ENCODE measurements at regions of chr5 and their contacts with region 1.

Region 1: DNA sequence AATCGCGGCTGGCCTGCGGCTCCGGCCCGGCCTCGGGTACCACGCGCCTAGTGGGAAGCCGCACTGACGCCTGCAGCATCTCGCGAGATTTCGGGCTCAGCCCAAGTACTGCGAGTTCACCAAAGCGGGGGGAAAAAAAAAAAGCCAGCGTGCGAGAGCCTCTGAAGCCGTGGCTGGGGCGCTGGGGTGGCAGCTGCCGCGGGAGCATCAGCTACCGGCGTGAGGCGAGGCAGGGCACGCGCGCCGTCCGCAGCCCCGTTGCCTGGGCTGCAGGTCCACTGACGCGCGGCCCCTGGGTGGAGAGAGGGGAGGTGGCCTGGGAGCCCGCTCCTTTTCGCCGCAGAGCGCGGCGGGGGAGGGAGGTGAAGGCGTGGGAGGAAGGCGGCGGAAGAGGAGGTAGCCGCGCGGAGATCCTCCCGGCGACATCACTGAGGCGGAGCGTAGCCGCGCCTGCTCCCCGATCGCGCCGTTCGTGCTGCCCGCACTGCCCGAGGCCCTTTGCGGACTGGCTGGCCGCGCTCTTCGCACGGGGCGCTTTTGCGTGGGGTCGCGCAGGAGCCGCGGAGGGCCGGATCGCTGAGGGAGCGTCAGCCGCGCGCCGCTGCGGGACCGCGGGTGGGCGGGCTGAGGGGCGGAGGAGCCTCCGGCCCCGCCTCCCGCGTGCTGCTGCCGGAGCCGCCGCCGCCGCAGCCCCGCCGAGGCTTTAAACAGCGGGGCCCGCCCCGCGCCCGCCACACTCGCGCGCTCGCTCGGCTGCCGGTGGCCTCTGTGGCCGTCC is at the start of gene SLC12A2:
- DNase-seq: peak; percentile 93 to 96 (median 95)
- ATAC-seq: peak; percentile 84 to 94 (median 92)
- H3K4me3 ChIP-seq: peak within 1 kb of the TSS; percentile 68 to 93 (median 90)
- H3K27ac ChIP-seq: peak within 1 kb of the TSS; percentile 92 to 100 (median 97)
- H3K4me1 ChIP-seq: peaks cover 0 to 60% (median 47%) of the 10 kb centered on the region in 12 donors
- H3K27me3 ChIP-seq: no peaks in the 10 kb centered on the region
- CTCF ChIP-seq: no peak
- POLR2A ChIP-seq: peak in 1 of 2 donors; percentile 6
- total RNA-seq, gene SLC12A2: 13.0 to 24.1 (median 16.1) TPM

Region 2: DNA sequence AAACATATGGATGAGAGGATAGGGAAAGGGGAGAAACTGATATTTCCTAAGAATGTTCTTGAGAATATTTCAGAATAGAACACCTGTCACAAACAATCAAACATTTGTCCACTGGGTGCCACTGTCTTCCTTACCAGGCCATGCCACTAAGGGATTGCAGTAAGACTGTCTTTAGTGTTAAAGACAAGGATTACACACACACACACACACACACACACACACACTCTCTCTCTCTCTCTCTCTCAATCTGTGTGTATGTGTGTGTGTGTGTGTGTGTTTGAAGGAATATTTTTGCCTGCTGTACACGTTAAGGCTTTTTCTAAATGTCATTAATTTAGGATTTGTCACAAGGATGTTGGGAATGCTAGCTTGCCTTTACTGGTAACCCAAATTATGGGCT is 325.6 kb before region 1 on chr5:
- intact Hi-C with region 1: loop called in 6 of 10 experiments (anchors 5 to 10 kb)
- DNase-seq: peak in 2 of 5 donors; percentile 22 to 23
- ATAC-seq: peak; percentile 47 to 88 (median 82)
- H3K4me3 ChIP-seq: no peak overlapping the region
- H3K27ac ChIP-seq: no peak overlapping the region
- H3K4me1 ChIP-seq: peaks cover 0 to 14% (median 5%) of the 10 kb centered on the region in 12 donors
- H3K27me3 ChIP-seq: no peaks in the 10 kb centered on the region
- CTCF ChIP-seq: peak; percentile 32 to 63 (median 46)
- POLR2A ChIP-seq: no peak

Region 3: GRCh38 chr5:127875235-127876021 is 207.8 kb before region 1 on chr5:
- intact Hi-C with region 1: loop called in 8 of 10 experiments (anchors 2 to 10 kb)
- DNase-seq: peak; percentile 40 to 80 (median 61)
- ATAC-seq: peak; percentile 83 to 95 (median 93)
- H3K4me3 ChIP-seq: no peak overlapping the region
- H3K27ac ChIP-seq: peak overlapping the region; percentile 18 to 86 (median 68)
- H3K4me1 ChIP-seq: peaks cover 3 to 43% (median 21%) of the 10 kb centered on the region in 12 donors
- H3K27me3 ChIP-seq: no peaks in the 10 kb centered on the region
- CTCF ChIP-seq: peak in 11 of 12 donors; percentile 11 to 54 (median 31)
- POLR2A ChIP-seq: no peak

Region 4: DNA sequence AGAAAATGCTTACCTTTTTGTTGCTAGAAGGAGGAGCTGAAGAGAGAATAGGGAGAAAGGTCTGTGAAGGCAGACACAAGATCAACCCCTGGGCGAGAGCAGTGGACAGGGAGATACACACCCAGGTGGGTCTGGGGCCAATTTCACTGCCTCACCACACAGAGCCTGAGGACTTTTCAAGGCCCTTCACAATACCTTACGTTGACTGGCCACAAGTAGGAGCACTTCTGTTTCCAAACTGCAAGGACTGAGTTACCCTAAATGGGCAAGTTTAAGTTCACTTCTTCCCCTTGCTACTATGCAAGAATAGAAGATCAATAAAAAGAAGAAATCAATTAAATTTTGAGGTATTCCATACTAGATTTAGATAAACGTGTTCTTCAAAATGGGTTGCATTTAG is 174.1 kb before region 1 on chr5:
- intact Hi-C with region 1: loop called in 2 of 10 experiments (anchors 1 to 10 kb)
- DNase-seq: no peak
- ATAC-seq: peak in 3 of 4 donors; percentile 65 to 70 (median 70)
- H3K4me3 ChIP-seq: no peak overlapping the region
- H3K27ac ChIP-seq: no peak overlapping the region
- H3K4me1 ChIP-seq: peaks cover 0 to 25% (median 4%) of the 10 kb centered on the region in 12 donors
- H3K27me3 ChIP-seq: no peaks in the 10 kb centered on the region
- CTCF ChIP-seq: peak in 11 of 12 donors; percentile 32 to 64 (median 47)
- POLR2A ChIP-seq: no peak

Region 5: GRCh38 chr5:127959152-127959764 is 124.0 kb before region 1 on chr5:
- intact Hi-C with region 1: loop called in 6 of 10 experiments (anchors 2 to 10 kb)
- DNase-seq: peak; percentile 72 to 84 (median 75)
- ATAC-seq: peak in 2 of 4 donors; percentile 33 to 44
- H3K4me3 ChIP-seq: no peak overlapping the region
- H3K27ac ChIP-seq: peak overlapping the region in 11 of 12 donors; percentile 23 to 75 (median 61)
- H3K4me1 ChIP-seq: peaks cover 8 to 58% (median 41%) of the 10 kb centered on the region in 12 donors
- H3K27me3 ChIP-seq: no peaks in the 10 kb centered on the region
- CTCF ChIP-seq: no peak
- POLR2A ChIP-seq: no peak

Region 6: GRCh38 chr5:127975935-127976334 is 107.3 kb before region 1 on chr5:
- intact Hi-C with region 1: loop called in 1 of 10 experiments (anchors 5 kb)
- DNase-seq: no peak
- ATAC-seq: no peak
- H3K4me3 ChIP-seq: peak overlapping the region in 1 of 12 donors; percentile 1
- H3K27ac ChIP-seq: peak overlapping the region in 8 of 12 donors; percentile 0 to 64 (median 43)
- H3K4me1 ChIP-seq: peaks cover 0 to 15% (median 1%) of the 10 kb centered on the region in 12 donors
- H3K27me3 ChIP-seq: no peaks in the 10 kb centered on the region
- CTCF ChIP-seq: no peak
- POLR2A ChIP-seq: no peak